Cardiac septum (tissue), 1 donor: ENCODE measurements at regions of chr2 and their contacts with region 1.

Region 1: DNA sequence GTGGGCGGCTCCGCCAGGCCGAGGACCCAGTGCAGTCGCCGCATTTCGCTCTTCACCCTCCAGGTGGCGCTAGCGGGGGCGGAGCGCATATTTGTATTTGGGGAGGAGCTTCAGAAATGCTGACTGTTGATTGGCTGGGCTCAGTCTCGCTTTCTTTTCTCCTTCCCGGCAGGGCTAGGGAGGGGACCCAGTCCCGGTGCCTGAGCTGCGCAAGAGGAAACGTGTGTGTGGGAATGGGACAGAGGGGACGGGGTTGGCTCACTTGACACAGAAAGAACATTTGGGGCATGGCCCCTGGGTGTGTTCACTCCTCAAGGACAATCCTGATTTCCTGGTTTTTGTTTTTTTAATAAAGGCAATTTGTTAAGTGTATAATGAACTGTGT is 20.3 kb upstream of the DNMT3A start:
- DNase-seq: peak; percentile 97

Region 2: DNA sequence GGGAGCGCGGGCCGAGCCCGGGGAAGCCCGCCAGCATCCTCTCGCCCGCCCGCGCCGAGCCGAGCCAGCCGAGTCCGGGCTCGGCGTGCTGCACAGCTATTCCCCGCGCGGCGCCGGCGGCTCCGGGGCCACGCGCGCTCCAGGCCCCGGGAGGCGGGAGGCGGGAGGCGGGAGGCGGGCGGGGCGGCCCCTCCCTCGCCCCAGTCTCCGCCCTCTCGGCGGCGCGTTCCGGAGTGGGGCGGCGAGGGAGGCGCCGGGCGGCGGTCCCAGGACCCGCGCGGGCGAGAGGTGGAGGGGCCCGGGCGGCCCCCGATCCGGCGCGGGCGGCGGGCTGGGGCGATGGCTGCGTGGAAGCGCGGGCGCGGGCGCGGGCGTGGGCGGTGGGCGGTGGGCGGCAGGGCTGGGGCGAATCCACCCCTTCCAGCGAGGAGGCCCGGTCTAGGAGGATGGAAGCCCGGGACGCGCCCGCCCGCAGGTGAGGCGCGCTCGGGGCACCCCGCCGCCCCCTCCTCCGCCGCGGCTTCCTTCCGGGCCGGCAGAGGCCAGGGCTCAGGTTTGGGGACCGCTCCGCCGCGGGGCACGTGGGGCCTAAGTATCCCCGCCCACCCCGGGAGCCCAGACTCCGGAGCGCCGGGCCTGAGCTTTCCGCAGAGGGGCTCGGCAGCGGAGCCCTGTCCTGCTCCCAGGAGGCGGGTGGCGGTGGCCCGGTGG is 441.8 kb before region 1 on chr2 and contains the start of gene ADCY3:
- intact Hi-C with region 1: no loop called
- DNase-seq: no peak
- total RNA-seq, gene ADCY3: 15.4 TPM

Region 3: GRCh38 chr2:24971536-24972314 is 390.3 kb before region 1 on chr2 and contains the start of gene DNAJC27:
- intact Hi-C with region 1: loop called (anchors 10 kb)
- DNase-seq: peak; percentile 100
- total RNA-seq, gene DNAJC27: 11.2 TPM

Region 4: DNA sequence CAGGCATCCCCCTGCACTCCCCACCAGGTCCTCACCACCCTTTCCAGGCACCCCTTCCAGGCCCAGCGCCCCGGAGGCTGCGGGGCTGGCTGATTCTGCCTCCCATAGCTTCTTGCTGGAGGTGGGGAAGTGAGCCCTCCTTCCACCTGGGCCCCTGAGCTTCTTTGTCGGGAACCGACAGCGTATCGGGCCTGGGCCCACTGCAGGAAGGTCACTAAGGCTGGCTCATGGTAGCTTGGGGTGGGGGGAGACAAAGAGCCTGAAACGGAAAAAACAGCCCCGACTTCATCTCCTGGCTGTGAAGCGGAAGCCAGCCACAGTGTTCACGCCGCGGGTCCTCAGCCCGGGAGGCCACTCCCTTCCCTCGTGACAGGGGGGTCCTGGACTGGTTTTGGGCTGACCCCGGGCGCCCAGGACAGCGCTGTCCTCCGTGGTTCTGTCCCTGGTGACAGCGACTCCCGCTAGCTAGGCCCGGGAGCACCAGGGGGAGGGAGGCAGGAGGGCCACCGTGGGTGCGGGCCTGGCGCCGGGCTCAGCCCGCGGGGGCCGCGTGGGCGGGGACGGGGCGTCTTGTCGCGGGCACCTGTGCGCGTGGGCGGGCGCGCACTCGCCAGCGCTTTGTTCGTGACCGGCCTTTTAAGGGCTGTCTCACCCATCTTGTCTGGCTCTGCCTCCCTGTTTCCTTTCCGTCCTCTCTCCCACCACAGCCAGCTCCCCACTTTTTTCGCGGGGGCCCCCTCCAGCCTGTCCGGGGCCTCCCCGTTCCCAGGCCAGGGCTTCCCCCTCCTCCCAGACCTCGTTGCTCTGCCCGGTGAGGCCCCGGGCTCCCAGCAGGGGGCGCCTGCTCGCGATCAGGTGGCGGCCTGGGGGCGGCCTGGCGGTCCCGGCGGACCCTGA is 85.2 kb before region 1 on chr2:
- intact Hi-C with region 1: no loop called
- DNase-seq: peak; percentile 86

Region 5: GRCh38 chr2:25314514-25315315 is 47.3 kb before region 1 on chr2:
- intact Hi-C with region 1: no loop called
- DNase-seq: peak; percentile 86

Region 6: GRCh38 chr2:25521665-25522387 is 159.8 kb after region 1 on chr2:
- intact Hi-C with region 1: loop called (anchors 1 kb)
- DNase-seq: no peak

Region 7: DNA sequence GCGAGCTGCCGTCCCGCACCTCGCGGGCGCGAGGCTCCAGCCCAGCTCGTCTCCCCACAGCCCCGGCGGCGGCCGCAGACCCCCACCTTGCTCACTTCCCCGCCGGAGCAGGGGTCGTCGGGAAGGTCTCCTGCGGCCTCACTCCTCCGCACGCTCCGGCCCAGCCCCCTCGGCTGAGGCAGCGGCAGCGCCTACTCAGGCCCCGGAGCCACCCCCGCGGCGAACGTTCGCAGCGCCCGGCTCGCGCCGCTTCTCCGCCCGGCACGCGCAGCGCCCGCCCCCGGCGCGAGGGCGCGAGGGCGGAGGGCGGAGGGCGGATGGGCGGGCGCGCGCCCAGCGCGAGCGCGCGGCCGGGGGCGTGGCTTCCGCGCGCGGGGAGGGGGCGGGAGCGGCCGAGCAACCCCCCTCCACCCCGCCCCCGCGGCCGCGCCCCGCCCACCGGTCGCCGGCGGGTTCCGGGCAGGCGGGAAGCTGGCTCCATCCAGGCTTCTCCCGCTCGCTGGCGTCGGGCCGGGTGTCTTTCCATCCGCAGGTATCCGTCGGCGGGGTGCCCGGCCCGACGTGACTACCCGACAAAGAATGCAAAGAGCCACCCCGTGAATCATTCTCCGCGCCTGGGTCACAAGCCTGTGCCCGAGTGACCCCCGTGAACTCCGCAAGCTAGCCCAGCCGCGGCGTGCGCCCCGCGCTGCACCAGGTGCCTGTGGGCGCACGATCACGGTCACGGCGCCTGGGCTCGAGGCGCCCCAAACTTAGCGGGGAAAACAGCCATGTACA is 311.4 kb after region 1 on chr2 and contains the start of gene DTNB:
- intact Hi-C with region 1: loop called (anchors 10 kb)
- DNase-seq: peak; percentile 91
- total RNA-seq, gene DTNB: 5.7 TPM